Activated CD4-positive, alpha-beta T cell treated with anti-CD3 and anti-CD28 coated beads, Interleukin-2, amount 10 ng/mL, durations not matched to agents 24 days and 14 days (primary cell): ENCODE measurements at regions of chr17 and their contacts with region 1.

Region 1: GRCh38 chr17:77957857-77958715 is at the start of gene TNRC6C:
- DNase-seq: peak; percentile 100
- H3K4me3 Mint-ChIP-seq: peak within 1 kb of the TSS; percentile 91
- H3K27ac Mint-ChIP-seq: peak within 1 kb of the TSS; percentile 86
- H3K4me1 Mint-ChIP-seq: peaks cover 39% of the 10 kb centered on the region
- H3K27me3 Mint-ChIP-seq: peaks cover 49% of the 10 kb centered on the region
- total RNA-seq, gene TNRC6C: 16.0 and 16.6 TPM in 2 replicates

Region 2: GRCh38 chr17:76384222-76384986 is 1573.7 kb before region 1 on chr17 and contains the start of gene SPHK1:
- intact Hi-C with region 1: loop called (anchors 5 kb)
- DNase-seq: peak; percentile 95
- H3K4me3 Mint-ChIP-seq: peak within 1 kb of the TSS; percentile 92
- H3K27ac Mint-ChIP-seq: peak within 1 kb of the TSS; percentile 96
- H3K4me1 Mint-ChIP-seq: peaks cover 10% of the 10 kb centered on the region
- H3K27me3 Mint-ChIP-seq: no peaks in the 10 kb centered on the region
- total RNA-seq, gene SPHK1: 26.8 and 27.6 TPM in 2 replicates

Region 3: DNA sequence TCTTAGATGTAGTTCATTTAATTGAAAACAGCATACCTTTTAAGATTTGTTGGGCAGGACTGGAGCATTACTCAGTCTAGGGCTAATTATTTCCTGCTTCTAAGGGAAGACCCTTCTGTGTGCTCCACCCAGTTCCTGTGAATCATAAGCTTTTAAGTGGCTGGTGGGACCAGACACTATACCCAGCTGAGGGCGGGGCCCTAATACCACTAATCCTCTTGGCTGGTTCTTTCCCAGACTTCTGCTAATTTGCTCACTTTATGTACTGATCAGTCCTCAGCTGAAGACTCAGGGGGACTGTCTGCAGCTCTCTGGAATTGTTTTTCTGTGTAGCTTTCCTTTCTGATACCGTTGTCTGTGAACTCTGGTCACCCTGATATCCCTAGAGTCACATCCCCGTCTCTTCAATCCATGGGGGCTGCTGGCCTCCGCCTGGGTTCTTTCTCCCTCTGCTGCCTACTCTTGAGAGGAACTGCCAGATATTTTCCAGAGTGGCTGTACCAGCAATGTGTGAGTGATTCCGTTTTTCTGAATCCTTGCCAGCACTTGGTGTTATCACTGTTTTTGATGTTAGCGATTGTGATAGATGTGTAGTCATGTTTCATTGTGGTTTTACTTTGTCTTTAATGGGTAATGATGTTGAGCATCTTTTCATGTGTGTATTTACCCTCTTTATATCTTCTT is 1185.1 kb before region 1 on chr17:
- intact Hi-C with region 1: no loop called
- DNase-seq: peak; percentile 74
- H3K4me3 Mint-ChIP-seq: peak overlapping the region; percentile 71
- H3K27ac Mint-ChIP-seq: peak overlapping the region; percentile 82
- H3K4me1 Mint-ChIP-seq: peaks cover 20% of the 10 kb centered on the region
- H3K27me3 Mint-ChIP-seq: no peaks in the 10 kb centered on the region

Region 4: GRCh38 chr17:77677211-77677610 is 280.9 kb before region 1 on chr17:
- intact Hi-C with region 1: no loop called
- DNase-seq: no peak
- H3K4me3 Mint-ChIP-seq: no peak overlapping the region
- H3K27ac Mint-ChIP-seq: no peak overlapping the region
- H3K4me1 Mint-ChIP-seq: peaks cover 5% of the 10 kb centered on the region
- H3K27me3 Mint-ChIP-seq: no peaks in the 10 kb centered on the region

Region 5: DNA sequence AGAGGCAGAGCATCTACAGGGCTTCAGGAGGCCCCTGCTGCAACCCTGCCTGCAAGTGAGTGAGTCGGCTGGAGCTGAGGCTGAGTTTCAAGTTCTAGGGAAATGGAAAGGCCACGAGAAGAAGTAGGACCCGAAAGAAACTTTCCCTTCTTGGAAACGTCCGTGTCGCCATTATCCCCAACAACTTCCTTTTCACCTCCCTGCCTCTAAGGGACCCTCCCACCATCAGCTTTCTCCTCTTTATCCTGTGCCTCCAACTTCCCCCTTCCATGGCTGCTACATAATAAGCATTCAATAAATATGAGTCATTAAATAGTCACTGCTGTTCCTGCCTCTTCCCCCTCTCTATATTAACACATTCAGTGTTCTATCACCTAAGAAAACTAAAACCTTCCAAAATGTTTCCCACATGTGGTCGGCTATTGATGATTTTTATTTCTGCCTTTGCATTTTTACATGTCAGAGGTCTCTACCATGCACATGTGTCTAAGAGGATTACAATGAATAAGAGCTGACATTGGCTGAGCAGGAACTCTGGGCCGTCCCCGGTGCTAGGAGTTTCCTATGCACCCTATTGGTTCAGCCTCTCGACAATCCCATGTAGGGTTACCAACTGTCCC is 115.4 kb before region 1 on chr17:
- intact Hi-C with region 1: loop called (anchors 2 kb)
- DNase-seq: no peak
- H3K4me3 Mint-ChIP-seq: peak overlapping the region; percentile 3
- H3K27ac Mint-ChIP-seq: peak overlapping the region; percentile 89
- H3K4me1 Mint-ChIP-seq: peaks cover 45% of the 10 kb centered on the region
- H3K27me3 Mint-ChIP-seq: peaks cover 15% of the 10 kb centered on the region

Region 6: DNA sequence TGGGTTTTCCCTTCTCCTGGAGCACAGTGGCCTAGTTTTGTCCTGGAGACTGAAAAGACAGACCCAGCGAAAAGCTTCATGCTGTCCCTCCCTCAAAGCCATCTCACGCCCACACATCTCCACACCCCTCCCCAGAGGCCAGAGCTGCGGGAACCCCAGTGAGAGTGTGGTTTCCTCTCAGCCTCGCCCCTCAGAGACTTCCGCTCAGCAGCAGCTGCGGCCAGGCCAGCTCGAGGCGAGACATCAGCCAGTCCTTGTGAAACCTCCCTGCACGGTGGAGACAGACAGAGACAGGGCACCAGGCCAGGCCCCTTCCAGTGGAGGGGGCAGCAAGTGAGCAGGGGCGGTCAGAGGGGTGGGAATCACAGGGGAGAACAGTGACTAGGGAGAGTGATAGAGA is 76.5 kb before region 1 on chr17:
- intact Hi-C with region 1: loop called (anchors 2 kb)
- DNase-seq: peak; percentile 95
- H3K4me3 Mint-ChIP-seq: peak overlapping the region; percentile 83
- H3K27ac Mint-ChIP-seq: peak overlapping the region; percentile 90
- H3K4me1 Mint-ChIP-seq: peaks cover 52% of the 10 kb centered on the region
- H3K27me3 Mint-ChIP-seq: peaks cover 12% of the 10 kb centered on the region

Region 7: DNA sequence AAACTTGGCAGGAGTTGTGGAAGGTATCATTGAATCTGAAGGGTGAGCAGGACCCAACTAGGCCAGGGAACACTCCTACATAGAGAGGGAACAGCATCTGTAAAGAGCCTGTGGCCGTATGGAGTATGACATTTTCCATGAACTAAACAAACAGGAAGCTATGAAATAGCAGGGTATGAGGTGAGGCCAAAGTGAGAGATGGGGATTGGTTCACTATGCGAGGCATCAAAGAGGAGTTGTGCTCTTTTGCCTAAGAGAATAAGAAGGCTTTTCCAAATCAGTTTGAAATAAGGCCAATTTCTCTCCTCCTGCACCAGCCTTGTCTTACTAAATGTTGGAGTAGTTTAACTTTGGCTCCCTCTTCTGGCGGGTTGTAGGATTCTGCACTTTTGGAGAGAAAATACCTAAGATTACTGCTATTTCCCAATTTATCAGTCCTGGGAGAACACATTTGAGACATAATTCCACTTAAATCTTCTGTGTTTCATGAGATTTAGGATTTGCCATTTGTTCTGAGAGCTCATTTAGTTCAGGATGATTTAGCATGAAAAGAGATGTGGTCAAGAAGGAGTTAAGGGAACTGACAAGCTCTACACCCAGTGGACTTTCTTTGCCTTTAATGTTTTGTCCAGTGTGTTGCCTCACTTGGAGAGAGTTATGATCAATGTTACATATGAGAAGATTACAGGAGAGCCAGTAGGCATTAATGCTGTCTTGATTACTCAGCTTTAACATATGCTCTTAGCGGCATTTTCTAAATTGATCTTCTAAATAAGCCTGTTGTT is 55.8 kb after region 1 on chr17:
- intact Hi-C with region 1: loop called (anchors 5 kb)
- DNase-seq: peak; percentile 85
- H3K4me3 Mint-ChIP-seq: no peak overlapping the region
- H3K27ac Mint-ChIP-seq: no peak overlapping the region
- H3K4me1 Mint-ChIP-seq: peaks cover 8% of the 10 kb centered on the region
- H3K27me3 Mint-ChIP-seq: no peaks in the 10 kb centered on the region

Region 8: GRCh38 chr17:78019976-78020716 is 62.1 kb after region 1 on chr17:
- intact Hi-C with region 1: loop called (anchors 2 kb)
- DNase-seq: no peak
- H3K4me3 Mint-ChIP-seq: peak overlapping the region; percentile 68
- H3K27ac Mint-ChIP-seq: peak overlapping the region; percentile 68
- H3K4me1 Mint-ChIP-seq: peaks cover 26% of the 10 kb centered on the region
- H3K27me3 Mint-ChIP-seq: no peaks in the 10 kb centered on the region

Region 9: DNA sequence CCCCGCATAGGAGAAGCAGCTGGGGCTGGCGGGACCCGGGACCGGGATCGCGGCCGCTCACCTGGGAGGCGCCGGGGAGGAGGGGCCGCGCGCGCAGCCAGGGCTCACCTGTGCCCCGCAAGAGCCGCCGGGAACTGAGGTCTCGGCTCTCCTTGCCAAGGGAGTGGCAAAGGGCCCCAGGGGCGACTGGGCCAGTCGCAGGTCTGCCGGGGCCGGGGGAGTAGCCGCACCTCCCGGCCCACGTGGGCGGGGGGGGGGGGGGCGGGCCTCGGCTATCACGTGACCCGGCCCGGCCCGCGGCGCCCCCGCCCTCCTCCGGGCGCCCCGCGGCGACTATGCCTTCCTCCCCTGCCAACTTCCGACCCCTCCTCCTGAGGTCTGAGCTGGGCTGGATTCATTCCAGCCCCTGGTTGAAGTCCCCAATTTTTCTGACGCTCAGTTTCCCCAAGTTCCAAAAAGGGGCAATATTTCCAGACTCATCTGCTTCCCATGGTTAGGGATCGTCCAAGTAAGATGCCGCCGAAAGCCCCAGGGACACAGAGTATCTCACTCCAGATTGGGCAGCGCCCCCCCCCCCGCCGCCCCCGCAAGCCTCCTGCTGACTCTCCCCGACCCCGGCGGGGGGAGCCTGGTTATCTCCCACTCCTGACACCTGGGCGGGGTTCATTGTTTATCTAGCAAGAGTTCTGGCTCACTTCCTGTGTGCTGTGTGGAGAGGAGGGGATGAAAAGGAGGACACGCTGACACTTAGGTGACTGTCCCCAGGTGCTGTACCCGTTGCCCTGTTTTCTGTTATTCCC is 170.7 kb after region 1 on chr17 and contains the start of gene TMC6:
- intact Hi-C with region 1: loop called (anchors 2 kb)
- DNase-seq: peak; percentile 91
- H3K4me3 Mint-ChIP-seq: peak within 1 kb of the TSS; percentile 99
- H3K27ac Mint-ChIP-seq: peak within 1 kb of the TSS; percentile 97
- H3K4me1 Mint-ChIP-seq: peaks cover 52% of the 10 kb centered on the region
- H3K27me3 Mint-ChIP-seq: no peaks in the 10 kb centered on the region
- total RNA-seq, gene TMC6: 250 and 251 TPM in 2 replicates

Region 10: DNA sequence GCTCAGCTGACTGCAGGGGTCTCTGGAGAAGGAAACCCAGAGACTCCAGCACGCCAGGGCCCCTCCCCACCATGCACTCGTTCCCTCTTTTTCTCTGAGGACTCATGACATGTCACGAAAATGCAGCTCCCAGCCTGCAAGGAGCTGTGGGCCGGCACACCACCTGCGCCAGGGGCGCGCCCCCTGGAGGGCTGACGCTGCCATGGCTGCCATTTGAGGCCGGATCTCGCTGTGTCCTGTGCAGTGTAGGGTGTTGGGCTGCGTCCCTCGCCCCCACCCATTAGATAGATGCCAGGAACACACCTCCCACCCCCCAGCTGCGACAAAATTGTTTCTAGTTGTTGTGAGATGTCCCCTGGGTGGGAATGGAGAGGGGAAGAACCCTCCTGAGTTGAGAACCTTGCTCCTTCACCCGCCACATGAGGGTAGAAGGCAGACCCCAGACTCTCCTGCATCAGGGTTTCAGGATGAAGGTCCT is 218.5 kb after region 1 on chr17:
- intact Hi-C with region 1: no loop called
- DNase-seq: peak; percentile 95
- H3K4me3 Mint-ChIP-seq: no peak overlapping the region
- H3K27ac Mint-ChIP-seq: no peak overlapping the region
- H3K4me1 Mint-ChIP-seq: peaks cover 38% of the 10 kb centered on the region
- H3K27me3 Mint-ChIP-seq: no peaks in the 10 kb centered on the region